B cell (primary cell): ENCODE measurements at regions of chr19 and their contacts with region 1.

Region 1: GRCh38 chr19:46661020-46661731 is at the start of gene DACT3:
- DNase-seq: peak; percentile 100
- ATAC-seq: peak; percentile 88
- H3K4me3 ChIP-seq: peak within 1 kb of the TSS; percentile 26 to 67 (median 52)
- H3K4me3 Mint-ChIP-seq: peak within 1 kb of the TSS; percentile 85
- H3K27ac ChIP-seq: peak within 1 kb of the TSS; percentile 32 to 54
- H3K27ac Mint-ChIP-seq: peak within 1 kb of the TSS; percentile 85
- H3K4me1 ChIP-seq: peaks cover 28 to 31% of the 10 kb centered on the region in 2 donors
- H3K4me1 Mint-ChIP-seq: peaks cover 23% of the 10 kb centered on the region
- H3K27me3 ChIP-seq: peaks cover 0 to 38% (median 22%) of the 10 kb centered on the region in 4 experiments
- H3K27me3 Mint-ChIP-seq: peaks cover 18% of the 10 kb centered on the region
- CTCF ChIP-seq: no peak
- total RNA-seq, gene DACT3: 0.15 and 0.34 TPM in 2 replicates

Region 2: GRCh38 chr19:46542428-46543230 is 118.5 kb before region 1 on chr19:
- CTCF ChIA-PET with region 1: interaction called, 19 read pairs
- POLR2A ChIA-PET with region 1: interaction called, 5 read pairs
- intact Hi-C with region 1: no loop called
- DNase-seq: peak; percentile 82
- ATAC-seq: peak; percentile 39
- H3K4me3 ChIP-seq: no peak overlapping the region
- H3K4me3 Mint-ChIP-seq: no peak overlapping the region
- H3K27ac ChIP-seq: no peak overlapping the region
- H3K27ac Mint-ChIP-seq: no peak overlapping the region
- H3K4me1 ChIP-seq: peaks cover 0 to 4% of the 10 kb centered on the region in 2 donors
- H3K4me1 Mint-ChIP-seq: peaks cover 4% of the 10 kb centered on the region
- H3K27me3 ChIP-seq: peaks cover 0 to 4% (median 0%) of the 10 kb centered on the region in 4 experiments
- H3K27me3 Mint-ChIP-seq: peaks cover 3% of the 10 kb centered on the region
- CTCF ChIP-seq: peak; percentile 98

Region 3: DNA sequence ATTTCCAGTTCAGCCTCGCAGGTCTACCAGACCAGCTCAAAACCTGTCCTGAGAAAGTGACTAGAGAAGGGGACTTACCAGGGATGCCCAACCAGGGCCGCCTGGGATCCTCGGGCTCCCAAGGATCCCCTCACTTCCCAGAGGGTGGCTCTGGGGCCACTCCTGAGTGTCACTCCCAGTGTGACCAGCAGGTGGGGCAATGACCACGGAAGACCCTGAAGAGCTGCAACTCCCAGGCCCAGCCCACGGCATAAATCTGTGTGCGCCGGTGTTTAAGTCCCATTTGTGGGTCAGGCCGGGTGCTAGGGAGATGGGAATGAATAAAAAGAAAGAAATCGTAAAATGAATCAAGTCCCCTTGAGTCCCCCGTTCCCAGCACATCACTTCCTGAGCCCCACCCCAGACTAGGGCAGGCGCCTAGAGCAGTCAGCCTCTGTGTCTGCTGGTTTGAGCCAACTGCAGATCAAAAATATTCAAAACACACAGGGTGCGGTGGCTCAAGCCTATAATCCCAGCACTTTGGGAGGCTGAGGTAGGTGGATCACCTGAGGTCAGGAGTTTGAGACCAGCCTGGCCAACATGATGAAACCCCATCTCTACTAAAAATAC is 47.0 kb before region 1 on chr19:
- CTCF ChIA-PET with region 1: interaction called, 447 read pairs
- POLR2A ChIA-PET with region 1: interaction called, 30 read pairs
- intact Hi-C with region 1: loop called (anchors 1 kb)
- DNase-seq: peak; percentile 89
- ATAC-seq: peak; percentile 53
- H3K4me3 ChIP-seq: no peak overlapping the region
- H3K4me3 Mint-ChIP-seq: peak overlapping the region; percentile 26
- H3K27ac ChIP-seq: no peak overlapping the region
- H3K27ac Mint-ChIP-seq: peak overlapping the region; percentile 77
- H3K4me1 ChIP-seq: peaks cover 49 to 71% of the 10 kb centered on the region in 2 donors
- H3K4me1 Mint-ChIP-seq: peaks cover 58% of the 10 kb centered on the region
- H3K27me3 ChIP-seq: no peaks in the 10 kb centered on the region
- H3K27me3 Mint-ChIP-seq: no peaks in the 10 kb centered on the region
- CTCF ChIP-seq: peak; percentile 86

Region 4: GRCh38 chr19:46644720-46645119 is 16.5 kb before region 1 on chr19:
- CTCF ChIA-PET with region 1: interaction called, 13 read pairs
- POLR2A ChIA-PET with region 1: interaction called, 6 read pairs
- intact Hi-C with region 1: no loop called
- DNase-seq: no peak
- ATAC-seq: no peak
- H3K4me3 ChIP-seq: no peak overlapping the region
- H3K4me3 Mint-ChIP-seq: no peak overlapping the region
- H3K27ac ChIP-seq: no peak overlapping the region
- H3K27ac Mint-ChIP-seq: no peak overlapping the region
- H3K4me1 ChIP-seq: peaks cover 11 to 12% of the 10 kb centered on the region in 2 donors
- H3K4me1 Mint-ChIP-seq: peaks cover 9% of the 10 kb centered on the region
- H3K27me3 ChIP-seq: peaks cover 0 to 42% (median 24%) of the 10 kb centered on the region in 4 experiments
- H3K27me3 Mint-ChIP-seq: peaks cover 49% of the 10 kb centered on the region
- CTCF ChIP-seq: no peak

Region 5: GRCh38 chr19:46728693-46729676 is 67.8 kb after region 1 on chr19:
- CTCF ChIA-PET with region 1: interaction called, 17 read pairs
- POLR2A ChIA-PET with region 1: no interaction called
- intact Hi-C with region 1: no loop called
- DNase-seq: peak; percentile 87
- ATAC-seq: peak; percentile 89
- H3K4me3 ChIP-seq: no peak overlapping the region
- H3K4me3 Mint-ChIP-seq: no peak overlapping the region
- H3K27ac ChIP-seq: no peak overlapping the region
- H3K27ac Mint-ChIP-seq: peak overlapping the region; percentile 80
- H3K4me1 ChIP-seq: peaks cover 10% of the 10 kb centered on the region in 2 donors
- H3K4me1 Mint-ChIP-seq: peaks cover 30% of the 10 kb centered on the region
- H3K27me3 ChIP-seq: no peaks in the 10 kb centered on the region
- H3K27me3 Mint-ChIP-seq: no peaks in the 10 kb centered on the region
- CTCF ChIP-seq: peak; percentile 92

Region 6: DNA sequence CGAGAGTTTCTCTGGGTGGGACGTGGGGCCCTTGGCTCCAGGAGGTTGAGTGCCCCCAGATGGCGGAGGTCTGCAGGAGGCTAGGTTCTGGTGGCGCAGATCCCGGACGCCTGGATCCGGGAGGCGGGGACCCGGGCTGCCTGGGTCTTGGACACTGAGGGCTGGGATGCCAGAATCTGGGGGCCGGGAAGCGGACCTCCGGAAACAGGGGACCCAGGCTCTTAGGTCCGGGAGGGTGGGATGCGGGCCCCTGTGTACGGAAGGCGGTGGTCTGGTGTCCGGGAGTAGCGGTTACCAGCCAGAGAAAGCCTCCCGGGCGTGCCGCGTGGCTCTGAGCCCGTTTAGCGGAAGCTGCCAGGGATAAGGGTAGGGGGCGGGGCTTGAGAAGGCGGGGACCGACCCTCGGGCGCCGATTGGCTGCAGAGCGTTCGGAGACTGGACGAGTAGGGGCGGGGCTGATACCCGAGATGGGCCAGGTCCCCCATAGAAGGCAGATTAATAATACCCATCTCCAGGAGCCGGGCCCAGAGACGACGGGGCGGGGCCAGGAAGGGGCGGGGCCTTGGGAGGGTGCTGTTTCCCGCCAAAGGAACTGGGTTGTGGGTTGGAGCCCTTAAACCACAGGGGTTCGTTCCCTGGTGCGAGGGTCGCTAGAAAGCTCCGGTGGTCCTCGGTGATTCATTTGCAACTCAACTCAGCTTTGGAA is 127.2 kb after region 1 on chr19 and contains the start of gene SLC1A5:
- CTCF ChIA-PET with region 1: no interaction called
- POLR2A ChIA-PET with region 1: no interaction called
- intact Hi-C with region 1: loop called (anchors 1 kb)
- DNase-seq: peak; percentile 97
- ATAC-seq: peak; percentile 86
- H3K4me3 ChIP-seq: peak within 1 kb of the TSS; percentile 67 to 95 (median 79)
- H3K4me3 Mint-ChIP-seq: peak within 1 kb of the TSS; percentile 93
- H3K27ac ChIP-seq: peak within 1 kb of the TSS; percentile 40 to 47
- H3K27ac Mint-ChIP-seq: peak within 1 kb of the TSS; percentile 98
- H3K4me1 ChIP-seq: peaks cover 32 to 51% of the 10 kb centered on the region in 2 donors
- H3K4me1 Mint-ChIP-seq: peaks cover 52% of the 10 kb centered on the region
- H3K27me3 ChIP-seq: no peaks in the 10 kb centered on the region
- H3K27me3 Mint-ChIP-seq: no peaks in the 10 kb centered on the region
- CTCF ChIP-seq: no peak
- total RNA-seq, gene SLC1A5: 35.2 and 37.3 TPM in 2 replicates